BJ (cell line): ENCODE measurements at regions of chr10 and their contacts with region 1.

Region 1: DNA sequence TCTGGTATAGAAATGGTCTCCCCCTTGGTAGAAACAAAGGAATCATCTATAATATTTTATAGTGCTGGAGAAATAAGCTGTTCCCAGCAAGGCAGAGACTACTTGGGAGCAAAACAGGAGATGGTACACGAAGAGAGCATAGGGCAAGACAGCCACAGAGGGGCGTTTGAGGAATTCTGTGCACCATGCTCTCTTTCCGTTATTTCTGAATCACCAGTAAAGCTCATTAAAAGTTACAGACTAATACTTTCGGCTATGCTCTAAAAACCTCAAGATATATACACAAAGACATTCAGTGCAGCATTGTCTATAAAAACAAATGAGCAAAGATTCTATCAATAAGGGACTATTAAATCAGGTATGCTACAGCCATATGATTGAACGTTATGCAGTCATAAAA is 68.5 kb upstream of the FHIP2A start:
- DNase-seq: peak; percentile 57
- H3K4me3 ChIP-seq: no peak overlapping the region
- H3K27me3 ChIP-seq: no peaks in the 10 kb centered on the region
- CTCF ChIP-seq: peak; percentile 53

Region 2: DNA sequence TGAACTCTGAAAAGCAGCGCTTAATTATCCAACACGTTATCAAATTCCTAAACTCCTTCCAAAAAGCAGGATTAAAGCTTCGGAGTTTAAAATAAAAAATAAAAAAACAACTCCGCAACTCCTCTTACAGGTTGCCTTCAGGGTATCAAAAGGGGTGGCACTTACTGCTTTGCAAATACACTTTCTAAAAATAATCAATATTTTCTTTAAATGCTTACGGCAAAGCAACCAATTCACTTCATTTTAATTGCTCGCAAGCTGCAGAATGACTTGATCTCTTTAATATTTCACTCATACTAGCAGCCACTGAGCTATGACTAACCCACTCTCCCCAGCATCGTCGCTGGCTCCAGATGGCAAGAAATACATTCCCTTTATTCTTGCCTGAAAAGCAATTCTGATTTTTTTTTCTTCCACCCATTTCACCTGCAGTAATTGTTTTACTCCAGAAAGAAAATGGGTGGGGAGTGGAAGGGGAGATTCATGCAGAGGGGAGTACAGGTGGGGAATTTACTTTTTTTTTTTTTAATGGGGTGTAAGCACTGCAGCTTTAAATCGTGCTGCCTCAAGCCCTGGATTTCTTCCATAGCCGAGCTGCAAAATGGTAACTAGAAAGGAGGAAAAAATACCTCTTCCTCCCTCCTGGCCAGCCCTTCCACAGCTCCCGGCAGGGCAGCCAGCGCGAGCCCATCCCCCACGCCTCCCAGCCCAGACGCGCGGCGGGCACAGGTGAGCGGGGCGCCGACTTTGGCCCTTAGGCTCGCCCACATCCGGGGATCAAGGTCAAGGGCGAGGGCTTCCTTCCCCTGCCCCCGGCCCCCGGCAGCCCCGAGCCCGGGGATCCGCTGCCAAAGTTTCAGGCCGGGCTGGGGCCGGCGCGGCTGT is 14.2 kb after region 1 on chr10:
- CTCF ChIA-PET with region 1: no interaction called
- POLR2A ChIA-PET with region 1: interaction called, 10 read pairs
- DNase-seq: no peak
- H3K4me3 ChIP-seq: peak overlapping the region; percentile 69
- H3K27me3 ChIP-seq: no peaks in the 10 kb centered on the region
- CTCF ChIP-seq: no peak